Activated T-helper 1 cell treated with anti-CD3 and anti-CD28 coated beads, Interleukin-12 subunit alpha, Interleukin-12 subunit beta, Interleukin-2, Interleukin-4 antibody, amounts not matched to agents 30 ng/mL and 10 ng/mL and 1 ng/mL, durations not matched to agents 14 hours and 24 hours and 36 hours (primary cell): ENCODE measurements at regions of chr3 and their contacts with region 1.

Region 1: GRCh38 chr3:196942226-196942914 is at the start of gene NCBP2:
- DNase-seq: peak; percentile 100
- H3K4me3 Mint-ChIP-seq: peak within 1 kb of the TSS; percentile 100
- H3K27ac Mint-ChIP-seq: peak within 1 kb of the TSS; percentile 97
- H3K4me1 Mint-ChIP-seq: peaks cover 55% of the 10 kb centered on the region
- H3K27me3 Mint-ChIP-seq: peaks cover 2% of the 10 kb centered on the region
- total RNA-seq, gene NCBP2: 102 and 111 TPM in 2 replicates

Region 2: GRCh38 chr3:196528639-196529233 is 413.6 kb before region 1 on chr3:
- intact Hi-C with region 1: no loop called
- DNase-seq: peak; percentile 76
- H3K4me3 Mint-ChIP-seq: peak overlapping the region; percentile 76
- H3K27ac Mint-ChIP-seq: peak overlapping the region; percentile 75
- H3K4me1 Mint-ChIP-seq: peaks cover 8% of the 10 kb centered on the region
- H3K27me3 Mint-ChIP-seq: peaks cover 6% of the 10 kb centered on the region

Region 3: GRCh38 chr3:196867507-196868296 is 74.7 kb before region 1 on chr3 and contains the start of gene SENP5:
- intact Hi-C with region 1: loop called (anchors 1 kb)
- DNase-seq: peak; percentile 86
- H3K4me3 Mint-ChIP-seq: peak within 1 kb of the TSS; percentile 100
- H3K27ac Mint-ChIP-seq: peak within 1 kb of the TSS; percentile 98
- H3K4me1 Mint-ChIP-seq: peaks cover 12% of the 10 kb centered on the region
- H3K27me3 Mint-ChIP-seq: peaks cover 4% of the 10 kb centered on the region
- total RNA-seq, gene SENP5: 45.3 and 50.7 TPM in 2 replicates

Region 4: DNA sequence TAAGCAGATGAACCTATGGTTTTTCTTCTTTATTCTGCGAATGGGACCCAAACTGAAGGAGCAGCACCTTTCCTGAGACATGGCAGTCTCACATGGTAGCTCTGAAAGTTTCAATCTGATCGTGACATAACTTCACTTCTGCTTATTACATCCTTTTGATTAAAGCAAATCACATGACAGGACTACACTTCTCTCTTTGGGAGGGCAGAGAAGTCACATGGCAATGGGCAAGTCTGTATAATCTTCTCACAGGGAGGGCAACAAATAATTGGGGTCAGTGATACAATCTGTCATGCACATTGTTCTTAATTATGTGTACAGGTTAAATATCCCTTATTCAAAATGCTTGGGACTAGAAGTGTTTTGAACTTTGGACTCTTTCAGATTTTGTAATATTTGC is 21.6 kb before region 1 on chr3:
- intact Hi-C with region 1: no loop called
- DNase-seq: no peak
- H3K4me3 Mint-ChIP-seq: no peak overlapping the region
- H3K27ac Mint-ChIP-seq: no peak overlapping the region
- H3K4me1 Mint-ChIP-seq: no peaks in the 10 kb centered on the region
- H3K27me3 Mint-ChIP-seq: no peaks in the 10 kb centered on the region

Region 5: DNA sequence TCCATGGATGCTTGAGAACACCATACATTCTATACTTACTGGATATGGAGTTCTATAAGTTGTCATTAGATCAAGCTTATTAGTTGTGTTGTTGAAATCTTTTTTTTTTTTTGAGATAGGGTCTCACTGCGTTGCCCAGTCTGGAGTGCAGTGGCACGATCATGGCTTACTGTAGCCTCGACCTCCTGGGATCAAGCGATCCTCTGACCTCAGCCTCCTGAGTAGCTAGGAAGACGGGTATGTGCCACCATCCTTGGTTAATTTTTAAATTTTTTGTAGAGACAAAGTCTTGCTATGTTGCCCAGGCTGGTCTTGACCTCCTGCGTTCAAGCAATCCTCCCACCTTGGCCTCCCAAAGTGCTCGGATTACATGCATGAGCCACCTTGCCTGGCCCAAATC is 12.5 kb after region 1 on chr3:
- intact Hi-C with region 1: no loop called
- DNase-seq: no peak
- H3K4me3 Mint-ChIP-seq: no peak overlapping the region
- H3K27ac Mint-ChIP-seq: no peak overlapping the region
- H3K4me1 Mint-ChIP-seq: no peaks in the 10 kb centered on the region
- H3K27me3 Mint-ChIP-seq: peaks cover 2% of the 10 kb centered on the region

Region 6: GRCh38 chr3:197417441-197417840 is 475.1 kb after region 1 on chr3:
- intact Hi-C with region 1: no loop called
- DNase-seq: no peak
- H3K4me3 Mint-ChIP-seq: no peak overlapping the region
- H3K27ac Mint-ChIP-seq: no peak overlapping the region
- H3K4me1 Mint-ChIP-seq: peaks cover 6% of the 10 kb centered on the region
- H3K27me3 Mint-ChIP-seq: peaks cover 15% of the 10 kb centered on the region